ENCODE measurements at regions of chr7 and their contacts with region 1.

Region 1: DNA sequence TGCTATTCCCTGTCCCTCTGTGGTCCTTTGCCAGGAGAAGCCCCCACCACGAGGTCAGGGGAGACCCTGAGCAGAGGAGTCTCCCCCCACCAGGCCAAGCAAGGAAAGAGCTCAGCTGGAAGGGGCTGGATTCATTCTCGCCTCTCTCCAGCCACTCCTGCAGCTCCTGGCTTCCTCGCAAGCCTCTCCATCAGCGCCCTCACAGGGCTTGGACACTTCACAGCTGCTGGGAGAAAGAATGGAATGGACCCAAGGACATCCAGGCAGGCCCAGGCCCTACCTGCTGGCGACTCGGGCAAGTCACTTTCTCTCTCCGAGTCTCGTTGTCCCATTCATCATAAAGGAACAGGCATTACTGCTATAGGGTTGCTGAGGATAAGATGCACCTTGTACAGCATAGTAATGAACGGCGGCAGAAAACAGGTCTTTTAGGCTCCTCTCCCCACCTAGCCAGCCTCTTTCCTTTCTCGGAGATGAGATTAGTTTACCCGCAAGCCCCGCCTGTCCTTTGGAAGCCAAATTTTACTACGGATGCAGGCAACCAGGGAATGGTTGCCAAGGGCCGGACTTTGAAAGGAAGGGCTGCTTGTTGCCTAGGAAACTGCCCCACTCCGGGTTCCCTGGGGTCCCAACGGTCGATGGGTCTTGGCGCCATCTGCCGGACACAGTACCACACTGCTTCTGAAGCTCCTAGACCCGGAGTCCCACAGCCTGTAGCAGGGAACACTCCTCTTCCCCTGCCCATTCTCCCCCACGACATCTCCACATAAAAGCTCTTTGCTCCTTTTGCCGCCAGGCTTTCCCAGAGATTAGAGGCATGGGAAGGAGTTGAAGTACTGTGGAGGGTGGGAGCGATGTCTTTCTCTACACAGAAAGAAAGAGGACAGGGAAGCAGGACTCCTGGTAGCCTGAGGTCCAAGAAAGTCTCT is 22.3 kb downstream of the IMPDH1 start:
- DNase-seq: peak; percentile 88 to 94
- ATAC-seq: peak; percentile 92
- H3K4me3 ChIP-seq: no peak overlapping the region
- H3K27ac ChIP-seq: no peak overlapping the region
- H3K4me1 ChIP-seq: no peaks in the 10 kb centered on the region
- H3K27me3 ChIP-seq: no peaks in the 10 kb centered on the region

Region 2: GRCh38 chr7:127828843-127829500 is 558.5 kb before region 1 on chr7:
- intact Hi-C with region 1: no loop called
- DNase-seq: no peak
- ATAC-seq: no peak
- H3K4me3 ChIP-seq: no peak overlapping the region
- H3K27ac ChIP-seq: no peak overlapping the region
- H3K4me1 ChIP-seq: no peaks in the 10 kb centered on the region
- H3K27me3 ChIP-seq: no peaks in the 10 kb centered on the region

Region 3: GRCh38 chr7:128343554-128344430 is 43.7 kb before region 1 on chr7 and contains the start of gene RBM28:
- intact Hi-C with region 1: loop called in 1 of 2 experiments (anchors 1 kb)
- DNase-seq: peak; percentile 91 to 92
- ATAC-seq: peak; percentile 96
- H3K4me3 ChIP-seq: peak within 1 kb of the TSS; percentile 79 to 88
- H3K27ac ChIP-seq: peak within 1 kb of the TSS in 1 of 2 donors; percentile 93
- H3K4me1 ChIP-seq: peaks cover 3% of the 10 kb centered on the region in 2 donors
- H3K27me3 ChIP-seq: no peaks in the 10 kb centered on the region
- total RNA-seq, gene RBM28: 38.4 to 41.5 TPM

Region 4: DNA sequence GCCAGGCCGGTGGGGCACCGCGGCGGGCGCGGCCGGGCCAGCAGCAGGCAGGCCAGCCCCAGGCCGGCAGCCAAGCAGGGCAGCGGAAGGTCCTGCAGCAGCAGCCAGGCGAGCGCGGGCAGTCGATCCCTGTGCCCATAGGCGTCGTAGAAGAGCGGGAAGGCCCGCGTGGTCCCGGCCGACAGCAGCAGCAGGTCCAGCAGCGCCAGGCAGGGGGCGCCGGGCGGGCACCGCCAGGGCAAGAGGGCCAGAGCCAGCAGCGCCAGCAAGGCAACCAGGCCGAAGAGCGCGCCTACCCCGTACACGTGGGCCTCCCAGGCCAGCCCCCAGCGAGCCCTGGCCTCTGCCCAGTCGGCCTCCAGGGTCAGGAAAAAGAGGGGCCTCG is 35.3 kb before region 1 on chr7:
- intact Hi-C with region 1: loop called (anchors 1 kb)
- DNase-seq: peak; percentile 82 to 89
- ATAC-seq: peak; percentile 76
- H3K4me3 ChIP-seq: peak overlapping the region; percentile 4 to 19
- H3K27ac ChIP-seq: no peak overlapping the region
- H3K4me1 ChIP-seq: no peaks in the 10 kb centered on the region
- H3K27me3 ChIP-seq: no peaks in the 10 kb centered on the region

Measured in aorta (tissue), 5 donors.